MCF 10A (cell line): ENCODE measurements at regions of chr4 and their contacts with region 1.

Region 1: DNA sequence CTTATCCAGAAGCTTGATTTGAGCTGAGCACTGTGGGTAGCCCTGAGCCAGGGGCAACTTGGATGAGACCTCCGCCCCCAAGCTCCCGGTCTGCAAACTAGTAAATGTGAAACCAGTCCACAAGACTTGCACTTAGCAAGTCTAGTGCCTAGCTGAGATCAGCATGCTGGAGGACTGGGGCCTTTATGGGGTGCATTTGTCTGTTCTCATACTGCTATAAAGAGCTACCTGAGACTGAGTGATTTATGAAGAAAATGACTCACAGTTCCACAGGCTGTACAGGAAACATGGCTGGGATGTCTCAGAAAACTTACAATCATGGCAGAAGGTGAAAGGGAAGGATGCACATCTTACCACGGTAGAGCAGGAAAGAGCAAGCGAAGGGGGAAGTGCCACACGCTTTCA is 42.1 kb upstream of the HOPX start:
- DNase-seq: peak; percentile 13
- H3K4me3 Mint-ChIP-seq: no peak overlapping the region
- H3K27ac Mint-ChIP-seq: peak overlapping the region; percentile 39
- H3K4me1 Mint-ChIP-seq: peaks cover 32% of the 10 kb centered on the region
- H3K27me3 Mint-ChIP-seq: no peaks in the 10 kb centered on the region
- CTCF ChIP-seq: no peak

Region 2: DNA sequence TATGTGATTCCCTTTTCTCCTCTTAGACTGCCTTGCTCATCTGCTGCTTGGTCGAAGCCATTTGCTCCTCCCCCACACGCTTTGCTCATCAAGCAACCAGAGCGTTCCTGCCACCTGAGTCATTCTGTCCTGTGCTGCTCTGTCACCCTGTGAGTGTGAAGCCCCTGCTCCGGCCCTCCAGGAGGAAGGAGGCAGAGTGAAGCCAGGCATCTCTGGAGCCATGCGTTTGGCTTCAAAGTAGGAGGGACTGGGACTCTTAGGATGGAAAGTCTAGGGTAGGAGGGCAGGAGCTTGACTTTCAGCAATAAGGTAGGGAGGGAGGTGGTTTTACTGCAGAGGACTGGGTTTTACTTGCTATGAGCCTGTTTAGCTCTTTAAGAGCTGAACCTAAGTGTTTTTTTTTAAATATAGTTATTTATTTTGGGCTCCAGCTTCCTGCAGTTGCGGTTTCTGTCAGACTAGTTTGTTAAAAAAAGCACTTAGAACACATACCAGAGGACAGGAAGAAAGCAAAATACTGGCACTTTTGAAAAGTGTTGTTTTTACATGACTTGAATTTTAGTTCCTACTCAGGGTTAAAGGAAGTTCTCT is 34.7 kb after region 1 on chr4:
- CTCF ChIA-PET with region 1: interaction called, 4 read pairs
- POLR2A ChIA-PET with region 1: interaction called, 11 read pairs
- intact Hi-C with region 1: no loop called
- DNase-seq: peak; percentile 87
- H3K4me3 Mint-ChIP-seq: peak overlapping the region; percentile 34
- H3K27ac Mint-ChIP-seq: peak overlapping the region; percentile 88
- H3K4me1 Mint-ChIP-seq: peaks cover 30% of the 10 kb centered on the region
- H3K27me3 Mint-ChIP-seq: no peaks in the 10 kb centered on the region
- CTCF ChIP-seq: no peak